ENCODE measurements at regions of chrX and their contacts with region 1.

Region 1: GRCh38 chrX:45849253-45849862 is 648.7 kb upstream of the DIPK2B start:
- DNase-seq: peak; percentile 61
- ATAC-seq: no peak
- H3K4me3 ChIP-seq: peak overlapping the region; percentile 68 to 77 (median 75); a peak in 5 of 6 replicates
- H3K27ac ChIP-seq: no peak overlapping the region
- H3K4me1 ChIP-seq: peaks cover 6% of the 10 kb centered on the region; the same call in 1 of the 2 replicates
- H3K27me3 ChIP-seq: no peaks in the 10 kb centered on the region; a peak in 1 of 5 replicates
- CTCF ChIP-seq: peak; percentile 42
- EP300 ChIP-seq: no peak
- POLR2A ChIP-seq: no peak
- RAD21 ChIP-seq: no peak

Region 2: DNA sequence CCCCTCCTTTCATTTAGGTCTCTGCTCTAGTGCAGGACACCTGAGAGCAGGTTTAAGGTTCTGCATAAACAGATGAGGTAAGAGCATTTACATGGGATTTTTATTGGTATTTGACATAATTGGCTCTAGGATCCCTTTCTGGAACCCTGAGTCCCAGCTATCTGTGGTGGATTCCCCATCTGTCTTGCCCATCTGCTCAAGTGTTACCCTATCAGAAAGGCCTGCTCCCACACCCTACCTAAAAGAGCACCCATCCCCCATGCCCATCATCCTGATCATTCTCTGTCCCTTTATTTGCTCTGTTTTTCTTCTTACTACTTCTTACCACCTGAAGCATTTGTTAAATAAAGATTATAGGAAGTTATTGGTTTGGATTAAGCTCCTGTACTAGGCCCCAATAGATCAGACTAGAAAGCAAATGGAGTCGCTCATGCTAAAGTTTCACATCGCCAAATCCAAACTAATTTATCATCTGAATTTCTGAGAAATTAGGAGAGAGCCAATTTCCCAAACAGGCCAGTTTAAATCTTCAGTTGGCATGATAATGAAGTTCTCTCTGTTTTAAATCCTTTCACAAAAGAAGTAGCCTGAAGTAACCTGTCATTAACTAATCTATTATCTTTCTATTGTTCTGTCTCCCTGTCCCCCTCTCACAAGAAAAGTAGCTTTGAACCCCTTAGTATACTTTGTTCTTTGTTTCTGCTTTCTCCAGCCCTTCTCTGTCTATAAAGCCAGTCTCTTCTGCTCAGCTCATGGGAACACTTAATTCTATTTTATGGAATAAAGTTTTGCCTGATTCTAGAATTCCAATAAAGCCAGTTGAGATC is 517.2 kb after region 1 on chrX:
- CTCF ChIA-PET with region 1: no interaction called
- POLR2A ChIA-PET with region 1: no interaction called
- in situ Hi-C with region 1: loop called (anchors 25 kb)
- intact Hi-C with region 1: no loop called
- DNase-seq: no peak
- ATAC-seq: no peak
- H3K4me3 ChIP-seq: no peak overlapping the region
- H3K27ac ChIP-seq: no peak overlapping the region
- H3K4me1 ChIP-seq: no peaks in the 10 kb centered on the region
- H3K27me3 ChIP-seq: no peaks in the 10 kb centered on the region
- CTCF ChIP-seq: no peak
- EP300 ChIP-seq: no peak
- POLR2A ChIP-seq: no peak
- RAD21 ChIP-seq: no peak

Measured in HepG2 (cell line).